Thyroid gland (tissue), 4 donors: ENCODE measurements at regions of chr21 and their contacts with region 1.

Region 1: DNA sequence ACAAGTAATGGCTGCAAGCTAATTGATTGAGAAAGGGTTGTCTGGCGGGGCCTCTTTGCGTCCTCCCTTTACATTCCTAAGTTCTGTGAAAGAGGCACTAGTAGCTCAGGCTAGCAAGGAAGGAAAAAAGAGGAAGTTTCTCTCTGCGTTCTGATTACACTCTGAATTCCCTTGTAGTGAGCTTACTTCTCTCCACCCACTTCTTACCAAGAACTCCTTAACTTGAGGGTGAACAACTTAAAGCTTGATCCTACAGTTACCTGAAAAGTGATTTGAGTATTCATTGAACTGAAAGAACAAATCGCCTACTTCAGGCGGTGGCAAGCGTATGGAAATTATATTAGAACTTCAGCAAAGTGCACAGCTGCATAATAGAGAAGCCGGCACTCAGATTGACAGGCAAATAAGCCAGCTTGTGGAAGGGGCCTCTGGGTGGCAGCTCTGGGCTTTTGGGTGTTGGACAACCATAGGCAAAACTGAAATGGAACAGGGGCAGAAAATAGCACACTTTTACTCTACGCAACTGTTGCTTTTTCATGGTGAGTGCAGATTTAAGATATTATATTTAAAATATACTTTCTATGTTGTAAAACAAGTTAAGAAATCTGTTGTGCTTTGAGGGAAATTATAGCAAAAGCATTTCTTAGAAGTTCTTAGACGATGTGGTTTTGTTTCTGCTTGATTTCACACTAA is 464.5 kb downstream of the USP25 start:
- DNase-seq: peak; percentile 64 to 70
- H3K4me3 ChIP-seq: peak overlapping the region in 2 of 3 donors; percentile 26 to 45
- H3K27ac ChIP-seq: peak overlapping the region; percentile 54 to 86 (median 77)
- H3K4me1 ChIP-seq: peaks cover 0 to 4% of the 10 kb centered on the region in 2 donors
- H3K27me3 ChIP-seq: no peaks in the 10 kb centered on the region
- CTCF ChIP-seq: peak in 2 of 6 experiments; percentile 24 to 39
- POLR2A ChIP-seq: peak in 1 of 2 donors; percentile 53

Region 2: GRCh38 chr21:16095005-16095404 is 99.2 kb before region 1 on chr21:
- intact Hi-C with region 1: no loop called
- DNase-seq: no peak
- H3K4me3 ChIP-seq: no peak overlapping the region
- H3K27ac ChIP-seq: no peak overlapping the region
- H3K4me1 ChIP-seq: no peaks in the 10 kb centered on the region
- H3K27me3 ChIP-seq: no peaks in the 10 kb centered on the region
- CTCF ChIP-seq: no peak
- POLR2A ChIP-seq: no peak

Region 3: DNA sequence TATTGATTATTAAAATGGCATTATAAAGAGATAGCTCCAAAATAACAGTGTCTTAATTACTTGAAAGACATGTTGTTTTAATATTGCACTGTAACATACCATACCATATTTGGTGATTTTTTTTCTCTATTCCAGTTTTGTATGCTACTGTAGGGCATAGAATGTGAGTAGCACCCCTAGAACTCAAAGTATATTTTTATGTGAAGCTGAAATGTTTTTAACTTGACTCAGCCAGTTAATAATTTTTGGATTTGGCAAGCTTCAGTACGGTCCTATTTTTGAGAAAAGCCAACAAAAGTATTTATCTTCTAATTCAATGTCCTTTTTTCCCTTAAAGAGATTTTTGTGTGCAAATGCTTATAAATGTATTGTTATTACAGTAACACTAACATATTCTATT is 129.4 kb after region 1 on chr21:
- intact Hi-C with region 1: loop called (anchors 10 kb)
- DNase-seq: no peak
- H3K4me3 ChIP-seq: no peak overlapping the region
- H3K27ac ChIP-seq: no peak overlapping the region
- H3K4me1 ChIP-seq: no peaks in the 10 kb centered on the region
- H3K27me3 ChIP-seq: no peaks in the 10 kb centered on the region
- CTCF ChIP-seq: no peak
- POLR2A ChIP-seq: no peak